ENCODE measurements at regions of chrX and their contacts with region 1.

Region 1: DNA sequence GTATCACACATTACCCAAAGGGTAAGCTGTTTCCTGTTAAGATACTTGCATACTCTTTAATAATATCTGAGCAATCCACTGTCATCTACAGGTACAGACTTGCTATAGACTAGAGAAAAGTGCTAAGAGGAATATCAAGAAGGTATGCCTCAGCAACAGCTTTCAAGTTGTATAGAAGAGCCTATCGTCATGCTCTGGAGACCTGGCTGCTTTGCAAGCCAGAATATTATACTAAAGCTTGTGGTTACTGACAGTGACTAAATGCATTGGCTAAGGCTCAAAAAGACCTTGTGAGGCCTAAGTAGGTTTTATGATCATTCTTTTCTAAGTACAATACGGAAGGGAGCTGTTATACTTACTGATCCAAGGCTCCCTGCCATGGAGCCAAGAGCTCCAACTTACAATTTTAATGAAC is 11.3 kb downstream of the LAMP2 start:
- DNase-seq: peak; percentile 91
- H3K4me3 Mint-ChIP-seq: no peak overlapping the region
- H3K27ac Mint-ChIP-seq: peak overlapping the region; percentile 90
- H3K4me1 Mint-ChIP-seq: peaks cover 27% of the 10 kb centered on the region
- H3K27me3 Mint-ChIP-seq: no peaks in the 10 kb centered on the region
- CTCF ChIP-seq: no peak

Region 2: GRCh38 chrX:120308959-120309872 is 148.6 kb before region 1 on chrX:
- CTCF ChIA-PET with region 1: interaction called, 6 read pairs
- POLR2A ChIA-PET with region 1: no interaction called
- intact Hi-C with region 1: loop called (anchors 10 kb)
- DNase-seq: peak; percentile 75
- H3K4me3 Mint-ChIP-seq: peak overlapping the region; percentile 73
- H3K27ac Mint-ChIP-seq: no peak overlapping the region
- H3K4me1 Mint-ChIP-seq: no peaks in the 10 kb centered on the region
- H3K27me3 Mint-ChIP-seq: peaks cover 18% of the 10 kb centered on the region
- CTCF ChIP-seq: peak; percentile 21

Region 3: DNA sequence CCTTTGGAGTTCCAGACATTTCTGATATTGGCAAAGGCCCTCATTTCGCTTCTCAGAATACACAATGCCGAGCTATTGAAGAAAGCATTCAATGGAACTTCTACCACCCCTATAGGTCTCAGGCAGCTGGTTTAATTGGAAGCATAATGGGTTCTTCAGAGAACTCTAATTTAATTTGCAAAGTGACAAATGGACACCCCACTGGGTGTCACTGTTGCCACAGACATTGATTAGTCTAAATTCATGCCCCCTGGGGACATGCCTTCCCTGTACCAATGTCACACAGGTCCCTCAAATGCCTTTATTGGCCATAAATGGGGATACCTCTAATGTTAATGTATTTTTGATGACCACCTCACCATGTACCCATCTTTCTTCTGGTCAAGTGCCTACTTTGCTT is 123.6 kb before region 1 on chrX:
- CTCF ChIA-PET with region 1: no interaction called
- POLR2A ChIA-PET with region 1: no interaction called
- intact Hi-C with region 1: no loop called
- DNase-seq: no peak
- H3K4me3 Mint-ChIP-seq: no peak overlapping the region
- H3K27ac Mint-ChIP-seq: no peak overlapping the region
- H3K4me1 Mint-ChIP-seq: no peaks in the 10 kb centered on the region
- H3K27me3 Mint-ChIP-seq: no peaks in the 10 kb centered on the region
- CTCF ChIP-seq: no peak

Region 4: DNA sequence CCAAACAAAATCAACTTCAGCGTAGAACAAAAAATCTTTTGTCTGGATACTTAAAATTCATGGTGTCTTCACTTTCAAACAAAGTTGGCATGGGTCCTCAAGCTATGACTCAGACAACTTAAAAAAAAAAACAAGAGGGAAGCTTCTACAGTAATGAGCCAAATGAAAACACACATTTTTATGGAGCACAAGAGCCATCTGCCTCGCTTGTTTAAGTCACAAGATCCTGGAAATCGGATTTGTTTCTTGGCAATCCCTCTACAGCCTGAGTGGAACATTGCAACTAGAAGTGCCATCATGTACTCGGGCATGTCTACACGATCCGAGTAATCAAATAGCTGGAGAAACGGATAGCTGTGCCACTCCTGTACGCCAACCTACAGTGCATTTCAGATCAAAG is 11.3 kb before region 1 on chrX:
- CTCF ChIA-PET with region 1: interaction called, 5 read pairs
- POLR2A ChIA-PET with region 1: interaction called, 16 read pairs
- intact Hi-C with region 1: no loop called
- DNase-seq: peak; percentile 67
- H3K4me3 Mint-ChIP-seq: no peak overlapping the region
- H3K27ac Mint-ChIP-seq: no peak overlapping the region
- H3K4me1 Mint-ChIP-seq: no peaks in the 10 kb centered on the region
- H3K27me3 Mint-ChIP-seq: peaks cover 36% of the 10 kb centered on the region
- CTCF ChIP-seq: no peak

Region 5: GRCh38 chrX:120485638-120486520 is 28.1 kb after region 1 on chrX:
- CTCF ChIA-PET with region 1: interaction called, 6 read pairs
- POLR2A ChIA-PET with region 1: interaction called, 19 read pairs
- intact Hi-C with region 1: no loop called
- DNase-seq: peak; percentile 88
- H3K4me3 Mint-ChIP-seq: peak overlapping the region; percentile 75
- H3K27ac Mint-ChIP-seq: peak overlapping the region; percentile 94
- H3K4me1 Mint-ChIP-seq: no peaks in the 10 kb centered on the region
- H3K27me3 Mint-ChIP-seq: no peaks in the 10 kb centered on the region
- CTCF ChIP-seq: peak; percentile 43